Endothelial cell of umbilical vein (primary cell): ENCODE measurements at regions of chr2 and their contacts with region 1.

Region 1: DNA sequence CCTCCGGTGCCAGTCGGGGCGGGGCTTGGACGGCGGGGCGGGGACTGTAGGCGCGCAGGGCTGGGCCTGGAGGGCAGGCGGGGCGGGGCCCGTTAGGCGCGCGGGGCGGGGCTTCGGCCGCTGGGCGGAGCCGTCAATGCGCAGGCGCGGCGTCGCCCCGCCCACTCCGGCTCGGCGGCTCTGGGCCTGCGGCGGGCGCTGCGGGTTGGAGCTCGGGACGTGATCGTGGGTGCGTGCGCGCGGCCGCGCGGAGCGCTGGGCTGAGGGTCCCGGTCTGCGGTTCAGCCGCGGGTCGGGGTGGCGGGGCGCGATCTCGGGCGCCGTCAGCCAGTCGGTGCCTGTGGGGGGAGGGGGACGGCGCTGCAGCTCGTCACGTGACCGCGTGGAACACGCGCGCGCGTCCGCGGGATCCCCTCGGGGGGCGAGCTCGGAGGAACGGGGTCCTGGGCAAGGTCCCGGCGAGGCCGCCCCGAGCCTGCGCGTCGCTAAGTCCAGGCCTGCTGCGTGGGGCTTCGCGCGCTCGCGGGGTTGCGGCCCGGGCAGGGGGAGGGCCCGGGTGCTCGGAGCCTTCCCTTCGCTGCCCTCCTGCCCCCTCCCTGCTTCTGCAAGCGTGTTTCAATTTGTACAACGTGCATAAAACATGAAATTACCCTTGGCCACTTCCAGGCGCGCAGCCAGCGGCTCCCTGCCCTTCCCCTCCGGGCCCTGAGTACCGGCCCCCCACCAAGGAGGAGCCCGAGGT is at the start of gene D2HGDH:
- DNase-seq: peak; percentile 78
- H3K4me3 ChIP-seq: peak within 1 kb of the TSS; percentile 50 to 87 (median 60)
- H3K27ac ChIP-seq: peak within 1 kb of the TSS; percentile 41
- H3K4me1 ChIP-seq: peaks cover 15% of the 10 kb centered on the region
- H3K27me3 ChIP-seq: no peaks in the 10 kb centered on the region
- CTCF ChIP-seq: no peak
- POLR2A ChIP-seq: peak; percentile 98
- total RNA-seq, gene D2HGDH: 22.3 and 27.9 TPM in 2 replicates

Region 2: DNA sequence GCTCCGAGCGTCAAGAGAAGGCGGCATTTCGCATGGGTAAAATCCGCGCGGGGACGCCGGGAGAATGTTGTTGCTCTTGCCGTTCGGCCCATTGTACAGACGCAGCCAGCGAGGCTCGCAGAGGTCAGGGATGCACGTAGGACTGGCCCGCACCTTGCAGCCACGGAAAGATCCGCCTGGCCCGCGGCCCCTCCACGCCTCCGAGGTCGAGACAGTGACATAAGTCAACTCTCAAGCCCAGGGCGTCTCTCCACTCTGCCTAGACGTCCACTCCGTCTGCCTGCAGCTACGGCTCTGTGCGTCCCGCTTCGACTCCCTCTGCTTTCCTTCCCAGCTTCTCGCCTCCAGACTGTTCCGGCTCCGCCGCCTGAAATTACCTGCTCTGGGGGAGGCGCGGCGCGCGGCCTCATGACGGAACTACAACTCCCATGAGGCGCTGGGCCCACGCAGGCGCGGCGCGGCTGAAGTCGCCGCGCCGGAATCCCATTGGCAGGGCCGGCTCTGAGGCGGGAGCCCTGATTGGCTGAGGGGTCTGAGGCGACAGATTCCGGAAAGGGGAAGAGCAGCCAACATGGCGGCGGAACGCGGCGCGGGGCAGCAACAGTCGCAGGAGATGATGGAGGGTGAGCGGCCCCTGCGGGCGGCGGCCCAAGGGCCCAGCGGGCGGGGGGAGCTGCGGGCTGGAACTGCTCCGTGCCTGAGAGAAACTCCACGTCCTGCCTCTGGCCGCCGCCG is 584.5 kb before region 1 on chr2 and contains the start of gene PPP1R7:
- CTCF ChIA-PET with region 1: no interaction called
- POLR2A ChIA-PET with region 1: no interaction called
- dilution Hi-C with region 1: no loop called
- intact Hi-C with region 1: loop called (anchors 5 kb)
- DNase-seq: peak; percentile 95
- H3K4me3 ChIP-seq: peak within 1 kb of the TSS; percentile 76 to 85 (median 78)
- H3K27ac ChIP-seq: no peak within 1 kb of the TSS
- H3K4me1 ChIP-seq: peaks cover 15% of the 10 kb centered on the region
- H3K27me3 ChIP-seq: no peaks in the 10 kb centered on the region
- CTCF ChIP-seq: peak in 1 of 2 donors; percentile 16
- POLR2A ChIP-seq: peak; percentile 74
- total RNA-seq, gene PPP1R7: 60.8 and 68.2 TPM in 2 replicates

Region 3: DNA sequence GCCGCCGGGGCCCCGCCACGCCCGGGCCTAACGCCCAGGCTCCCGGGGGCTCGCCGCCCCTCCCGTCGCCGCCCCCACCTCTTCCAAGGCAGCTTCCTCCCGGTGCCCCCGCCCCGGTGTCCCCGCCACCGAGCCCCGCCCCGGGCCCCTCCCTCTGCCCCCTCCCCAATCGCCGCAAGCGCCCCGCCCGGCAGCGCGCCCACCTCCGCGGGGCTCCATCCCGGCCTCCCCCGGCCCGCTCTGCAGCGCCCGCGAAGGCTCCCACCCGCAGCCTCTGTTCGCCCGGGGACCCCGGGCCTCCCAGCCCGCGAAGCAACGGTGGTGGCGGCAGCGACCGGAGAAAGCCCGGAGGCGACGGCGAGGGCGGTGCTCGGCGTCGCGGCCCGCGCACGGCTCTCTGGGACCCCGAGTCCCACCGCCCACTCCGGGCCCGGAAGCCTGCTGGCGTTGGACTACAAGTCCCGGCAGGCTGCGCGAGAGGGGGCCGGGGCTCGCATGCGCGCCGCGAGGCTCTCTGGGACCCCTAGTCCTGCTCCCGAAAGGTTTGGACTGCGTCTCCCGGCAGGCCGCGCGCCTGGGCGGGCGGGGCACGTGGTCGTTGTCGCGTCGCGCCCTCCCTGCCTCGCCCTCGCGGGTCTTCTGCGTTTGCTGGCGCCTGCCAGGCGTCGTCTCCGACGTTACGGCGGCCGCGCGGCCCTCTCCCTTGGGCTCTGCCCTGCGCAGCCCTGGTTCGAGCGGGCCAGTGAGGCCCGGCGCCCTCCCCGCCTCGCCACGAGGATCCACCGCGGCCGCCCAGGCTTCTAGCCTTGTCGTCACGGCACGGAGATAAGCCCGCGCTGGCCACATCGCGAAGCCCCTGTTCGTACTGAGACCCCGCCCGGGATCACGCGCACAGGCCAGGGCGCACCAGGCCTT is 226.1 kb before region 1 on chr2 and contains the start of gene STK25:
- CTCF ChIA-PET with region 1: no interaction called
- POLR2A ChIA-PET with region 1: no interaction called
- dilution Hi-C with region 1: no loop called
- intact Hi-C with region 1: loop called (anchors 2 kb)
- DNase-seq: peak; percentile 98
- H3K4me3 ChIP-seq: peak within 1 kb of the TSS; percentile 55 to 84 (median 77)
- H3K27ac ChIP-seq: peak within 1 kb of the TSS; percentile 14
- H3K4me1 ChIP-seq: peaks cover 16% of the 10 kb centered on the region
- H3K27me3 ChIP-seq: no peaks in the 10 kb centered on the region
- CTCF ChIP-seq: no peak
- POLR2A ChIP-seq: peak; percentile 88
- total RNA-seq, gene STK25: 236 and 286 TPM in 2 replicates

Region 4: GRCh38 chr2:241673797-241674725 is 60.6 kb before region 1 on chr2:
- CTCF ChIA-PET with region 1: no interaction called
- POLR2A ChIA-PET with region 1: no interaction called
- dilution Hi-C with region 1: no loop called
- intact Hi-C with region 1: loop called (anchors 2 kb)
- DNase-seq: no peak
- H3K4me3 ChIP-seq: no peak overlapping the region
- H3K27ac ChIP-seq: no peak overlapping the region
- H3K4me1 ChIP-seq: no peaks in the 10 kb centered on the region
- H3K27me3 ChIP-seq: no peaks in the 10 kb centered on the region
- CTCF ChIP-seq: no peak
- POLR2A ChIP-seq: no peak

Region 5: GRCh38 chr2:241702132-241703031 is 32.3 kb before region 1 on chr2:
- CTCF ChIA-PET with region 1: interaction called, 41 read pairs
- POLR2A ChIA-PET with region 1: no interaction called
- dilution Hi-C with region 1: no loop called
- intact Hi-C with region 1: loop called (anchors 1 kb)
- DNase-seq: peak; percentile 82
- H3K4me3 ChIP-seq: peak overlapping the region; percentile 49 to 75 (median 64)
- H3K27ac ChIP-seq: peak overlapping the region; percentile 15
- H3K4me1 ChIP-seq: peaks cover 6% of the 10 kb centered on the region
- H3K27me3 ChIP-seq: no peaks in the 10 kb centered on the region
- CTCF ChIP-seq: peak; percentile 45 to 56
- POLR2A ChIP-seq: no peak

Region 6: DNA sequence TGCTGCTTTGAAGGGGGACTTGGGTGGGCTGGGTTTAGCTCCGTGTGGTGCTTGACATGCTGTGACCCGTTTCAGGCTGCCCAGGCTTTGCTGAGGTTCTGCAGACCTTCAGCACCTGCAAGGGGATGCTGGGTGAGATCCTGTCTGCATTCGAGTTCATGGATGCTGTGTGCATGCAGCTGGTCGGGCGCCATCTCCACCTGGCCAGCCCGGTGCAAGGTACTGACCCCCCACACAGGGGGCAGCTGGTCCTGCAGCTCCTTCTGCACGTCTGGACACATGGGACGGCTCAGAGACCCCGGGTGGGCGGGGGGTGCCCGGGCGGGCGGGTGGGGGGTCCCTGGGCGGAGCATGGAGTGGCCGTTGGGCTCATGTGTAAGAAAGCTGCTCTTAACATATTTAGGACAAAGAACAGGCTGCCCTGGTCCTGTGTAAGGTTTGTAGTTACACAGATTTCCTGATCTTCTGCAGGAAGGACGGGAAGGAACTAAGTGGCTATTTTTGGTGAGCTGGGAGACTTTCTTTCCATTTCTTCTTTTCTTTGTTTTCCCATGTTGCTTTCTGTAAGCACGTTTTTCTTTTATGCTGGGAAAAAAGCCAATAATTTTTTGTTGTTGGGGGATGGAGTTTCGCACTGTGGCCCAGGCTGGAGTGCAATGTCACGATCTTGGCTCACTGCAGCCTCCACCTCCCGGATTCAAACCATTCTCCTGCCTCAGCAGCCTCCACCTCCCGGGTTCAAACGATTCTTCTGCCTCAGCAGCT is 15.6 kb after region 1 on chr2:
- CTCF ChIA-PET with region 1: interaction called, 3 read pairs
- POLR2A ChIA-PET with region 1: no interaction called
- dilution Hi-C with region 1: no loop called
- intact Hi-C with region 1: loop called (anchors 1 kb)
- DNase-seq: peak; percentile 62
- H3K4me3 ChIP-seq: no peak overlapping the region
- H3K27ac ChIP-seq: no peak overlapping the region
- H3K4me1 ChIP-seq: no peaks in the 10 kb centered on the region
- H3K27me3 ChIP-seq: no peaks in the 10 kb centered on the region
- CTCF ChIP-seq: no peak
- POLR2A ChIP-seq: no peak